ENCODE measurements at regions of chr11 and their contacts with region 1.

Region 1: DNA sequence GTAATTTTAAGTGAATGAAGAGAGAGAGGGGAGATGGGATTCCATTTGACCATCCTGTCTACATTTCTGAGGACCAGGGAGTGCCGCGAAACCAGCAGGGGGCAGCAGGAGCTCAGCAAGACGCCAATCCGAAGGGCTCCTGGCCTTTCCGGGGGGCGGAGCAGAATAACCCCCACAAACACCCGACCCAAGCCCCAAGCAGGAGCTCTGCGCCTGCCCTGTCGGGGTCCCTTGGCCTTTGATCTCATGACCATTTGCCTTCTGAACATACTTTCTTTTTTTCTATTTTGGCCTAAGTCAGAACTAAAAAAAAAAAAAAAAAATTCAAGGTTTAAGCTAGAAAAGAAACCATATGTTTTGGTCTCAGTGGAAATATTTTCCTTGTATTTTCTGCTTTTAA is 21.9 kb upstream of the SCN2B start:
- DNase-seq: peak; percentile 84
- ATAC-seq: peak; percentile 75
- H3K4me3 ChIP-seq: peak overlapping the region in 1 of 5 experiments; percentile 21
- H3K4me3 Mint-ChIP-seq: peak overlapping the region; percentile 44
- H3K27ac ChIP-seq: no peak overlapping the region
- H3K27ac Mint-ChIP-seq: no peak overlapping the region
- H3K4me1 ChIP-seq: peaks cover 0 to 3% of the 10 kb centered on the region in 2 donors
- H3K4me1 Mint-ChIP-seq: no peaks in the 10 kb centered on the region
- H3K27me3 ChIP-seq: peaks cover 0 to 15% (median 2%) of the 10 kb centered on the region in 4 experiments
- H3K27me3 Mint-ChIP-seq: peaks cover 3% of the 10 kb centered on the region
- CTCF ChIP-seq: peak; percentile 93

Region 2: GRCh38 chr11:117316197-117316961 is 882.0 kb before region 1 on chr11 and contains the start of gene BACE1:
- CTCF ChIA-PET with region 1: no interaction called
- POLR2A ChIA-PET with region 1: no interaction called
- intact Hi-C with region 1: no loop called
- DNase-seq: peak; percentile 10
- ATAC-seq: peak; percentile 28
- H3K4me3 ChIP-seq: peak within 1 kb of the TSS in 4 of 5 experiments; percentile 35 to 54 (median 52)
- H3K4me3 Mint-ChIP-seq: peak within 1 kb of the TSS; percentile 83
- H3K27ac ChIP-seq: no peak within 1 kb of the TSS
- H3K27ac Mint-ChIP-seq: no peak within 1 kb of the TSS
- H3K4me1 ChIP-seq: peaks cover 16 to 19% of the 10 kb centered on the region in 2 donors
- H3K4me1 Mint-ChIP-seq: peaks cover 12% of the 10 kb centered on the region
- H3K27me3 ChIP-seq: peaks cover 0 to 32% (median 20%) of the 10 kb centered on the region in 4 experiments
- H3K27me3 Mint-ChIP-seq: peaks cover 43% of the 10 kb centered on the region
- CTCF ChIP-seq: no peak
- total RNA-seq, gene BACE1: not detected in 2 replicates

Region 3: GRCh38 chr11:117842131-117842941 is 356.0 kb before region 1 on chr11:
- CTCF ChIA-PET with region 1: no interaction called
- POLR2A ChIA-PET with region 1: no interaction called
- intact Hi-C with region 1: no loop called
- DNase-seq: no peak
- ATAC-seq: no peak
- H3K4me3 ChIP-seq: no peak overlapping the region
- H3K4me3 Mint-ChIP-seq: no peak overlapping the region
- H3K27ac ChIP-seq: no peak overlapping the region
- H3K27ac Mint-ChIP-seq: no peak overlapping the region
- H3K4me1 ChIP-seq: peaks cover 0 to 3% of the 10 kb centered on the region in 2 donors
- H3K4me1 Mint-ChIP-seq: no peaks in the 10 kb centered on the region
- H3K27me3 ChIP-seq: no peaks in the 10 kb centered on the region
- H3K27me3 Mint-ChIP-seq: peaks cover 9% of the 10 kb centered on the region
- CTCF ChIP-seq: no peak

Region 4: GRCh38 chr11:118227865-118228785 is 29.8 kb after region 1 on chr11:
- CTCF ChIA-PET with region 1: interaction called, 20 read pairs
- POLR2A ChIA-PET with region 1: no interaction called
- intact Hi-C with region 1: no loop called
- DNase-seq: peak; percentile 70
- ATAC-seq: peak; percentile 73
- H3K4me3 ChIP-seq: peak overlapping the region in 1 of 5 experiments; percentile 21
- H3K4me3 Mint-ChIP-seq: peak overlapping the region; percentile 72
- H3K27ac ChIP-seq: peak overlapping the region; percentile 66 to 80
- H3K27ac Mint-ChIP-seq: peak overlapping the region; percentile 88
- H3K4me1 ChIP-seq: peaks cover 62 to 65% of the 10 kb centered on the region in 2 donors
- H3K4me1 Mint-ChIP-seq: peaks cover 60% of the 10 kb centered on the region
- H3K27me3 ChIP-seq: peaks cover 0 to 7% (median 4%) of the 10 kb centered on the region in 4 experiments
- H3K27me3 Mint-ChIP-seq: peaks cover 8% of the 10 kb centered on the region
- CTCF ChIP-seq: no peak

Region 5: DNA sequence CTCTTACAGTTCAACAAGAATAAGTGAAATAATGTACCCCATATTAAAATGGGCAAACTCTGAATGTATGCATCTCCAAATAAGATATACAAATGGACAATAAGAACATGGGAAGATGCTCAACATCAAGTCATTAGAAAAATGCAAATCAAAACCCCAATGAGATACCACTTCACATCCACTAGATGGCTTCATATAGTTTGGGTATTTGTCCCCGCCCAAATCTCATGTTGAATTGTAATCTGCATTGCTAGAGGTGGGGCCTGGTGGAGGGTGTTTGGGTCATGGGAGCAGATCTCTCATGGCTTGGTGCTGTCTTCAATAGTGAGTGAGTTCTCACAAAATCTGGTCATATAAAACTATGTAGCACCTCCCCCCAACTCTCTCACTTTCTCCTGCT is 60.0 kb after region 1 on chr11:
- CTCF ChIA-PET with region 1: interaction called, 26 read pairs
- POLR2A ChIA-PET with region 1: interaction called, 4 read pairs
- intact Hi-C with region 1: no loop called
- DNase-seq: no peak
- ATAC-seq: no peak
- H3K4me3 ChIP-seq: no peak overlapping the region
- H3K4me3 Mint-ChIP-seq: no peak overlapping the region
- H3K27ac ChIP-seq: no peak overlapping the region
- H3K27ac Mint-ChIP-seq: no peak overlapping the region
- H3K4me1 ChIP-seq: peaks cover under 1 to 1% of the 10 kb centered on the region in 2 donors
- H3K4me1 Mint-ChIP-seq: peaks cover 1% of the 10 kb centered on the region
- H3K27me3 ChIP-seq: peaks cover 0 to 27% (median 21%) of the 10 kb centered on the region in 4 experiments
- H3K27me3 Mint-ChIP-seq: peaks cover 52% of the 10 kb centered on the region
- CTCF ChIP-seq: no peak

Region 6: DNA sequence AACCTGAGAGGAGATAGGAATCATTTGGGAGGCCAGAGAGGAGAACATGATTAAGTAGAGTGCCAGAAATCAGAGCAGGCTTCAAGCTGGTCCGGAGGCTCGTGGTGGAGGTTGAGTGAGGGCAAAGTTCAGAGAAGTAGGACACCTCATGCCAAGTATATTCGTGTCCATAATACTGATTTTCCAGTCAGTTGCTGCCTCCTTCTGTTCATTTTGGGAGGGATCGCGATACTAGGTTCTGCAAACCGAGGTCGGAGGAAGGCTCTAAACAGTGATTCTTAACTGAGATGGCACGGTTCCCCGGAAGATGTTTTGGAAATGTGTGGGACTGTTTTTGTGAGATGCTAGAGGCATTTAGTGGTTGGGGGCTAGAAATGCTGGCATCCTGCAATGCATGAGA is 92.6 kb after region 1 on chr11:
- CTCF ChIA-PET with region 1: interaction called, 87 read pairs
- POLR2A ChIA-PET with region 1: no interaction called
- intact Hi-C with region 1: loop called (anchors 1 kb)
- DNase-seq: peak; percentile 54
- ATAC-seq: peak; percentile 49
- H3K4me3 ChIP-seq: no peak overlapping the region
- H3K4me3 Mint-ChIP-seq: no peak overlapping the region
- H3K27ac ChIP-seq: no peak overlapping the region
- H3K27ac Mint-ChIP-seq: no peak overlapping the region
- H3K4me1 ChIP-seq: no peaks in the 10 kb centered on the region
- H3K4me1 Mint-ChIP-seq: peaks cover under 1% of the 10 kb centered on the region
- H3K27me3 ChIP-seq: peaks cover 0 to 7% (median 2%) of the 10 kb centered on the region in 4 experiments
- H3K27me3 Mint-ChIP-seq: peaks cover 34% of the 10 kb centered on the region
- CTCF ChIP-seq: peak; percentile 37

Region 7: GRCh38 chr11:118353084-118353710 is 154.8 kb after region 1 on chr11:
- CTCF ChIA-PET with region 1: interaction called, 92 read pairs
- POLR2A ChIA-PET with region 1: no interaction called
- intact Hi-C with region 1: loop called (anchors 1 kb)
- DNase-seq: peak; percentile 64
- ATAC-seq: no peak
- H3K4me3 ChIP-seq: no peak overlapping the region
- H3K4me3 Mint-ChIP-seq: no peak overlapping the region
- H3K27ac ChIP-seq: no peak overlapping the region
- H3K27ac Mint-ChIP-seq: no peak overlapping the region
- H3K4me1 ChIP-seq: no peaks in the 10 kb centered on the region
- H3K4me1 Mint-ChIP-seq: no peaks in the 10 kb centered on the region
- H3K27me3 ChIP-seq: peaks cover 0 to 3% (median 0%) of the 10 kb centered on the region in 4 experiments
- H3K27me3 Mint-ChIP-seq: peaks cover 20% of the 10 kb centered on the region
- CTCF ChIP-seq: peak; percentile 83

Region 8: GRCh38 chr11:118471030-118471429 is 272.7 kb after region 1 on chr11:
- CTCF ChIA-PET with region 1: no interaction called
- POLR2A ChIA-PET with region 1: no interaction called
- intact Hi-C with region 1: no loop called
- DNase-seq: no peak
- ATAC-seq: no peak
- H3K4me3 ChIP-seq: no peak overlapping the region
- H3K4me3 Mint-ChIP-seq: no peak overlapping the region
- H3K27ac ChIP-seq: no peak overlapping the region
- H3K27ac Mint-ChIP-seq: no peak overlapping the region
- H3K4me1 ChIP-seq: no peaks in the 10 kb centered on the region
- H3K4me1 Mint-ChIP-seq: no peaks in the 10 kb centered on the region
- H3K27me3 ChIP-seq: no peaks in the 10 kb centered on the region
- H3K27me3 Mint-ChIP-seq: no peaks in the 10 kb centered on the region
- CTCF ChIP-seq: no peak

Measured in B cell (primary cell).